Body of pancreas (tissue), 4 donors: ENCODE measurements at regions of chr2 and their contacts with region 1.

Region 1: GRCh38 chr2:42954227-42954962 is 162.0 kb upstream of the HAAO start:
- DNase-seq: no peak
- ATAC-seq: peak; percentile 41
- H3K4me3 ChIP-seq: no peak overlapping the region
- H3K27ac ChIP-seq: peak overlapping the region in 2 of 4 donors; percentile 19 to 63
- H3K4me1 ChIP-seq: peaks cover 9% of the 10 kb centered on the region
- H3K27me3 ChIP-seq: no peaks in the 10 kb centered on the region
- CTCF ChIP-seq: no peak
- POLR2A ChIP-seq: no peak

Region 2: DNA sequence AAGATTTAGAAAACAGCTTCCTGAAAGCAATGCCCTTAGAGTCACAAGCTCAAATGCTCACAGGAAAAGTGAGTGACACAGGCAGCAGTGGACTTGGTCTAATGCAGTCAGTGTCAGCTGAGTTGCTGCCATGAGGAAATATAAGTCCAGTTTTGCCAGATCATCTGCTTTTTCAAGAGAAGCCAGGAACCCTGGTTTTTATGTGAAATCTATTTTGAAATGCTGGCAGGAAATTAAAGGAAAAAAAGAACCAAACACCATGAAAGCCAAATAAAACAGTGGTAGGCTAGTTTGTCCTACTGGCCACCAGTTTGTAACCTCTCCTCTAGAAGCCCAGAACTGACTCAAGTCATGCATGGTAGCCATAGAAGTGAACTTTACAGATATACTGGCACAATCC is 532.2 kb after region 1 on chr2:
- intact Hi-C with region 1: loop called (anchors 5 kb)
- DNase-seq: peak in 1 of 4 donors; percentile 64
- ATAC-seq: no peak
- H3K4me3 ChIP-seq: no peak overlapping the region
- H3K27ac ChIP-seq: peak overlapping the region in 1 of 4 donors; percentile 28
- H3K4me1 ChIP-seq: peaks cover 10% of the 10 kb centered on the region
- H3K27me3 ChIP-seq: no peaks in the 10 kb centered on the region
- CTCF ChIP-seq: no peak
- POLR2A ChIP-seq: no peak